ENCODE measurements at regions of chr20 and their contacts with region 1.

Region 1: DNA sequence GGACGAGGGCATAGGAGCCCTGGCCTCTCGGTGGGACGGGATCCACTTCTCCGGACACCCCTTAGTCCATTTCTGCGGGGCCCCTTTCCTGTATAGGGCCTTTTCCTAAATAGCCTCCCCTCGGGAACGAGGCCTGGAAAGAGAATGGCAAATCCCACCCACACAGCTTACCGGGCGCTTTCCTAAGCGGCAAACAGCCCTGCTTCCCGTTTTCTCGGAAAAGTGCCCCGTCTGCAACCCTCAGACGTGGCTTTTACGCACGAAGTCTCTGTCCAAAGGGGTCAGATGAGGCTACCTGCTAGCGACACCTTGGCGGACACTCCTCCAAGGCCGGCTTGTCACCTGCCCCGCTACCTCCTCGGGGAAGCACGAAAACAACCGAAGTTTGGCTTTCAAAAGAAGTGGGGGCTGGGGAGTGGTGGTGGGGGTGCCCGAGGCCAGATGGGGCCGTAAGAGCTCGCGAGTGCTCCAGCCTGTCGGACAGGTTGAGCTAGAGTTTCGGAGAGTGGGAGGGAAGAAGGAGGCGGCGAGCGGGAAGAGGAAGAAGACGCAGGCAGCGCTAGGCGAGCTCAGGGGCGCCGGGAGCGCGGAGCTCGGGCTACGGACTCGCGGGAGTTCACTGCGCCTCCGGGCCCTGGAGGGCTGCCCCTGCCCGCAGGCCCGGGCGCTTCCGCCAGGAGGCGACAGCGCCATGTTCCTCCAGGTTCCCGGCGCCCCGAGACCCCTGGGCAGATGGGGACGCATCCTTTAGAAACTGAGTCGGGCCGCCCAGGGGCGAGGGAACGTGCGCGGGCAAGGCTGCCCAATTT is 768 bp downstream of the TFAP2C start:
- DNase-seq: peak; percentile 59
- H3K4me3 Mint-ChIP-seq: peak overlapping the region; percentile 32
- H3K27ac Mint-ChIP-seq: no peak overlapping the region
- H3K4me1 Mint-ChIP-seq: peaks cover 6% of the 10 kb centered on the region
- H3K27me3 Mint-ChIP-seq: peaks cover 71% of the 10 kb centered on the region

Region 2: GRCh38 chr20:56200456-56200855 is 429.4 kb before region 1 on chr20:
- intact Hi-C with region 1: no loop called
- DNase-seq: no peak
- H3K4me3 Mint-ChIP-seq: no peak overlapping the region
- H3K27ac Mint-ChIP-seq: no peak overlapping the region
- H3K4me1 Mint-ChIP-seq: no peaks in the 10 kb centered on the region
- H3K27me3 Mint-ChIP-seq: no peaks in the 10 kb centered on the region

Region 3: DNA sequence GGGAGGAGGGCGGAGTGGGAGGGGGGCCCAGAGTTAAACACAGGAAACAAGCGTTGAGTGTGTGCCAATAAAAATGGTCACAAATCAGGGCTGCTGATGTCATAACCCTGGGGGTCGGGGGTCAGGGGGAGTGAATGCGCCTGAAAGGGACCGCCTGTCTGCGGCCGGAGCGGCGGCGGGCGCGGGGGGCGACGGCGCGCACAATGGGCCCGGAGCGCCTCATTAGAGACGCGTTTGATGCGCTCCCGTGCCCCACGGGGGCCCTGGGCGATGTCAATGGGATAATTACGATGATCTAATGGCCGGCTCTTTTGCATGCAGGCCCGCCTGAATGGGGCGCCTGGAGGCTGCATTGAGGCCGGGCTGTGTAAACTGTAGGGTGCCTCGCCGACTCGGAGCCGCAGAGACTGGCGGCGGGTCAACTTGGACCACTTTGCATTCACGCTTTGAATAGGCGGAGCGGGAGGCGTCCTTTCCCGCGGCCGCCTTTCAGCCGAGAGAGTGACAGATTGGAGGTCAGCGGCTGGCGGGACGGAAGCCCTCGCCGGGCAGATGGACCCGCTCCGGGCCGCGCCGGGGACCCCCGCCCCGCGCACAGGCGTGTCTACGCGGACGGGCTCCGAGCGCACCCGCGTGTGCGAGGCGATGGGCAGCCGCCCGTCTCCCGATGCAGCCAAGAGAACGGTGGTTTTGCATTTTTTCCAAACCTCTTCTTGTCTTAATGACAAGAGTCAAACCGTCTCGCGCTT is 295.4 kb after region 1 on chr20:
- intact Hi-C with region 1: loop called (anchors 2 kb)
- DNase-seq: peak; percentile 55
- H3K4me3 Mint-ChIP-seq: no peak overlapping the region
- H3K27ac Mint-ChIP-seq: no peak overlapping the region
- H3K4me1 Mint-ChIP-seq: no peaks in the 10 kb centered on the region
- H3K27me3 Mint-ChIP-seq: peaks cover 64% of the 10 kb centered on the region